Ovary (tissue), 10 donors: ENCODE measurements at regions of chr4 and their contacts with region 1.

Region 1: DNA sequence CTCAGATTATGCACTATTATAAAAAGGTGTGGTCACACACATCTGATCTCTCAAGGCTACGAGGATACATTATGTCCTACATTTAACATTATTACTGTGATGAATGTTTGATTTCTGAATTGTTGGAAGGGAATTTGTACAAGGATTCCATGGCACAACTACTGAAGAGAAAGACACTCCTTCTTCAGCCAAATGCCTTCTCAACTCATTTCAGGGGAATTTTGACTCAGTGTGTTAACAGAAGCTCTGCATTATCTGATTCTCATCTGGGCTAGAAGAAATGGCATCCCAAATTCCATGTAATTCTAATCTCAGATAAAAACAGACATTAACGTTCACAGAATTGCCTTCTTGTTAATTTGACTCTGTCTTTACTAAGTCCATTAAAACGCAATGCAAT is 477.7 kb downstream of the PDGFC start:
- DNase-seq: no peak
- H3K4me3 ChIP-seq: no peak overlapping the region
- H3K27ac ChIP-seq: no peak overlapping the region
- H3K4me1 ChIP-seq: no peaks in the 10 kb centered on the region
- H3K27me3 ChIP-seq: no peaks in the 10 kb centered on the region
- CTCF ChIP-seq: no peak
- EP300 ChIP-seq: no peak
- POLR2A ChIP-seq: no peak

Region 2: DNA sequence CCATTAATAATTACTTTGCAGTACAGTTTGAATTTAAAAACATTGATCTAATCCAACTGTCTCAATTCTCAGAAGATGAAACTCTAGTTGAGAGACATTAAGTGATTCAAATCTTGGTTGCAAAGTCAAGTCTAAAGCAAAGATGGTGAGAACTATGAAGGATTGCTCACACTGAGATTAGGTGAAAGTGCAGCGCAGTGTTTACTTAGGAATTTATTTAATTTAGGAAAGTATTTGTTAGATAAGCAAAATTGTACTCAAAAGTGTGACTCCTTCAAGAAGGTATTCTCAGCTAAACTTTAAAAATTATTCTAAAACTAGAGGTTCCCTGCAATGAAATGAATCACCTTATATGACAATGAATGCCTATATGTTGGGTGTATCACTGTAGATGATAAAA is 22.8 kb after region 1 on chr4:
- intact Hi-C with region 1: loop called in 1 of 4 experiments (anchors 1 kb)
- DNase-seq: no peak
- H3K4me3 ChIP-seq: no peak overlapping the region
- H3K27ac ChIP-seq: no peak overlapping the region
- H3K4me1 ChIP-seq: no peaks in the 10 kb centered on the region
- H3K27me3 ChIP-seq: no peaks in the 10 kb centered on the region
- CTCF ChIP-seq: no peak
- EP300 ChIP-seq: no peak
- POLR2A ChIP-seq: no peak

Region 3: GRCh38 chr4:156536661-156537060 is 42.8 kb after region 1 on chr4:
- intact Hi-C with region 1: no loop called
- DNase-seq: no peak
- H3K4me3 ChIP-seq: no peak overlapping the region
- H3K27ac ChIP-seq: no peak overlapping the region
- H3K4me1 ChIP-seq: no peaks in the 10 kb centered on the region
- H3K27me3 ChIP-seq: no peaks in the 10 kb centered on the region
- CTCF ChIP-seq: no peak
- EP300 ChIP-seq: no peak
- POLR2A ChIP-seq: no peak